ENCODE measurements at regions of chr3 and their contacts with region 1.

Region 1: GRCh38 chr3:177069514-177070329 is 127.6 kb downstream of the TBL1XR1 start:
- DNase-seq: no peak
- H3K4me3 Mint-ChIP-seq: no peak overlapping the region
- H3K27ac Mint-ChIP-seq: no peak overlapping the region
- H3K4me1 Mint-ChIP-seq: peaks cover 20% of the 10 kb centered on the region
- H3K27me3 Mint-ChIP-seq: no peaks in the 10 kb centered on the region

Region 2: DNA sequence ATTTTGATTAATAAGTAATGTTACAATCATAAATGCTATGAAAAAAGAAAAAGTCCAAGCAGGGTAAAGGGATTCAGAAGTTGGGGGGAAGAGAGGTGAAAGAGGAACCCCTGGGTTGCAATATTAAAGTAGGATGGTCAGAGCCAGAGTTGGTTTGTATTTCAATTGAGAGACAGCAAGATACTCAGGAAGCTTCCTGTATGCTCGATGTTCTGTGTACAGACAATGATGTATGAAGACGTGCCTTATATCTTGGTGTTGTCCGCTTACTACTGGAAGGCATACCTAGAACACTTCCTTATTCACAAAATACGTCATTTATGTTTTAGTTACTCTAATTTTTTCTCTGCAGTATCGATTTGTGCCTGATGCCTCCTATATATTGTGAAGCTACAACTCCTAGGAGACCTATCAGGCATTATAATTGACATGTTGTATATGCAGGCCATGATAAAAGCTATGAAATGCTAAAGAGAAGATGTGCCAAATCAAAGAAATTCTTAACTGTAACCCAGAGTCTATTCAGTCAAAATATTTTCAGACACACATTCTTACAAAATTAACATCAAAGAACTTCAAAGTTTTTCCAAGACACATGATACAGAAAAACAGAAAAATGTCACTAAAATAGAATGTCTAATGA is 40.1 kb after region 1 on chr3:
- intact Hi-C with region 1: loop called (anchors 5 kb)
- DNase-seq: no peak
- H3K4me3 Mint-ChIP-seq: no peak overlapping the region
- H3K27ac Mint-ChIP-seq: peak overlapping the region; percentile 12
- H3K4me1 Mint-ChIP-seq: peaks cover 41% of the 10 kb centered on the region
- H3K27me3 Mint-ChIP-seq: no peaks in the 10 kb centered on the region

Measured in activated CD4-positive, alpha-beta T cell treated with anti-CD3 and anti-CD28 coated beads, Interleukin-2, amount 10 ng/mL, durations not matched to agents 24 days and 14 days (primary cell).